Heart left ventricle (tissue), 16 donors: ENCODE measurements at regions of chr1 and their contacts with region 1.

Region 1: DNA sequence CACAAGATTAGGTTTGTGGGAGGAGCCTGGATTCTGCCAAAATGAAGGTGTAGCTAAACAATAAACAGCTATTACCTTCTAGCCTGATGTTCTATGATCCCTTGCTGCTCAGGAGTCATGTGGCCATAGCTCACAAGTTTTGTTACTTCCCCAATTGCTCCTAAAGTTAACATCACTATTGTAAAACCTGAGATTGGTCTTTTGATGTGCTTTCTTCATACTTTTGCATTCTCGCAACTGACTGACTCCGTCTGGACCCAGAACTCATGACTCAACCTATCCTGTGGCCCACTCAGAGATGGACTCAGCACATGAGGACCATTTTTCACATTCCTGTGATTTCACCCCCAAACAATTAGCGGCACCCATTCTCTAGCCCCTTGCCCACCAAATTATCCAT is 69.1 kb downstream of the PTGS2 start:
- DNase-seq: no peak
- ATAC-seq: no peak
- H3K4me3 ChIP-seq: no peak overlapping the region
- H3K27ac ChIP-seq: no peak overlapping the region
- H3K4me1 ChIP-seq: no peaks in the 10 kb centered on the region
- H3K27me3 ChIP-seq: no peaks in the 10 kb centered on the region
- CTCF ChIP-seq: no peak
- POLR2A ChIP-seq: no peak

Region 2: GRCh38 chr1:186574951-186575747 is 36.0 kb before region 1 on chr1:
- intact Hi-C with region 1: no loop called
- DNase-seq: no peak
- ATAC-seq: no peak
- H3K4me3 ChIP-seq: no peak overlapping the region
- H3K27ac ChIP-seq: no peak overlapping the region
- H3K4me1 ChIP-seq: peaks cover 0 to 18% (median 0%) of the 10 kb centered on the region in 12 donors
- H3K27me3 ChIP-seq: no peaks in the 10 kb centered on the region
- CTCF ChIP-seq: no peak
- POLR2A ChIP-seq: no peak

Region 3: DNA sequence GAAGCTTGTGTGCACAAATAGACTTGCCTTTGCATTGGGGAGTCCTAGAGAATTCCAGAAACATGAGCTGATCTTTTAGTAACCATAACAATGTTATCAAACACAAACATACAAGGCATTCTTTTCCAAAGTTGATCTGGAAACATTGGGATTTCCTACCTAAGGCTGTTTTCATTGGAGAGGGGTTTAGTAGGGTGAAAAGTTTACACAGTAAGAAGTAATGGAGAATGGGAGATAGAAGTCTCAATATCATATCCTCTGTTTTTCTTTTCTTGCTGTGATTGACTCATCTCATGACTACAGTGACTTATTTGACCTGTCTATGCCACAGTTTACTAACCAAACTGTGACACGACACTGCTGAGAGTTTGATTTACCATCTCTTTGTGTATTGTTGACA is 152.0 kb after region 1 on chr1:
- intact Hi-C with region 1: loop called in 1 of 10 experiments (anchors 5 kb)
- DNase-seq: no peak
- ATAC-seq: peak in 1 of 4 donors; percentile 37
- H3K4me3 ChIP-seq: no peak overlapping the region
- H3K27ac ChIP-seq: no peak overlapping the region
- H3K4me1 ChIP-seq: no peaks in the 10 kb centered on the region
- H3K27me3 ChIP-seq: no peaks in the 10 kb centered on the region
- CTCF ChIP-seq: no peak
- POLR2A ChIP-seq: no peak

Region 4: GRCh38 chr1:186925881-186926669 is 314.9 kb after region 1 on chr1:
- intact Hi-C with region 1: no loop called
- DNase-seq: no peak
- ATAC-seq: peak in 2 of 4 donors; percentile 68 to 77
- H3K4me3 ChIP-seq: no peak overlapping the region
- H3K27ac ChIP-seq: peak overlapping the region in 7 of 12 donors; percentile 4 to 68 (median 47)
- H3K4me1 ChIP-seq: peaks cover 0 to 8% (median 0%) of the 10 kb centered on the region in 12 donors
- H3K27me3 ChIP-seq: no peaks in the 10 kb centered on the region
- CTCF ChIP-seq: peak in 2 of 12 donors; percentile 6 to 11
- POLR2A ChIP-seq: no peak